BJ (cell line): ENCODE measurements at regions of chr12 and their contacts with region 1.

Region 1: DNA sequence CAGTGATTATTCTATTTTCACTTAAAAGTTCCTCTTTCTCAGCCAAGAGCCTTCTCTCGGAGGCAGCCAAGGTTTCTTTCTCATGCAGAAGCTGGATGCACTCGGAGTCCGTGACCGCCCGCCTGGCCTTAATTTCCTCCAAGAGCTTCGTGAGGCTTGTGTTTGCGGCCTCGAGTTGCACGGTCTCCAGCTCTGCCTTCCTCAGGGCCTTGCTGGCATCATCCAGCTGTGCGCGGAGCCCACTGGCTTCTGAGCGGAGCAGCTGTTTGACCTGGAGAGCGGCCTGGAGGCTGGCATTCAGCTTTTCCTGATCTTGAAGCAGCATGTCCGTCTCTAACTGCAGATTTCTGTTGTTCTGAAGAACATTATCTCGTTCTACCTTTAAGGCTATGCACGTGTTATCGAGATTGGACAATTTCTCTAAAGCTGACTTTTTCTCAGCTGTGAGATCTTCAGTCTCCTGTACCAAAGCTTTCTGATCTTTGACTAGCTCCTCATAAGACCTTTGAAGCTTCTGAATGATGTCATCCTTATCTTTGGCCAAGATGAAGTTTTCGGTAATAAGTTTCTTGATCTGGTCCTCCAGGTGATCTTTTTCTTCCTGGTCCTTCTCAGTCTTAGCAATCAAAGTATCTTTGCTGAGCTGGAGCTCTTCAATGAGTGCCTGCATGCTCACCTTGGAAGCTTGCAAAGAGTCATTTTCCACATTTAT is 57.2 kb upstream of the VPS33A start:
- DNase-seq: no peak
- H3K4me3 ChIP-seq: no peak overlapping the region
- H3K27me3 ChIP-seq: no peaks in the 10 kb centered on the region
- CTCF ChIP-seq: no peak

Region 2: GRCh38 chr12:122182887-122183585 is 140.4 kb before region 1 on chr12 and contains the start of gene LRRC43:
- CTCF ChIA-PET with region 1: no interaction called
- POLR2A ChIA-PET with region 1: no interaction called
- DNase-seq: no peak
- H3K4me3 ChIP-seq: peak within 1 kb of the TSS; percentile 49
- H3K27me3 ChIP-seq: no peaks in the 10 kb centered on the region
- CTCF ChIP-seq: no peak
- polyA plus RNA-seq, gene LRRC43: 0.71 and 1.6 TPM in 2 replicates

Region 3: GRCh38 chr12:122293081-122293480 is 30.4 kb before region 1 on chr12:
- CTCF ChIA-PET with region 1: no interaction called
- POLR2A ChIA-PET with region 1: no interaction called
- DNase-seq: no peak
- H3K4me3 ChIP-seq: no peak overlapping the region
- H3K27me3 ChIP-seq: no peaks in the 10 kb centered on the region
- CTCF ChIP-seq: no peak

Region 4: DNA sequence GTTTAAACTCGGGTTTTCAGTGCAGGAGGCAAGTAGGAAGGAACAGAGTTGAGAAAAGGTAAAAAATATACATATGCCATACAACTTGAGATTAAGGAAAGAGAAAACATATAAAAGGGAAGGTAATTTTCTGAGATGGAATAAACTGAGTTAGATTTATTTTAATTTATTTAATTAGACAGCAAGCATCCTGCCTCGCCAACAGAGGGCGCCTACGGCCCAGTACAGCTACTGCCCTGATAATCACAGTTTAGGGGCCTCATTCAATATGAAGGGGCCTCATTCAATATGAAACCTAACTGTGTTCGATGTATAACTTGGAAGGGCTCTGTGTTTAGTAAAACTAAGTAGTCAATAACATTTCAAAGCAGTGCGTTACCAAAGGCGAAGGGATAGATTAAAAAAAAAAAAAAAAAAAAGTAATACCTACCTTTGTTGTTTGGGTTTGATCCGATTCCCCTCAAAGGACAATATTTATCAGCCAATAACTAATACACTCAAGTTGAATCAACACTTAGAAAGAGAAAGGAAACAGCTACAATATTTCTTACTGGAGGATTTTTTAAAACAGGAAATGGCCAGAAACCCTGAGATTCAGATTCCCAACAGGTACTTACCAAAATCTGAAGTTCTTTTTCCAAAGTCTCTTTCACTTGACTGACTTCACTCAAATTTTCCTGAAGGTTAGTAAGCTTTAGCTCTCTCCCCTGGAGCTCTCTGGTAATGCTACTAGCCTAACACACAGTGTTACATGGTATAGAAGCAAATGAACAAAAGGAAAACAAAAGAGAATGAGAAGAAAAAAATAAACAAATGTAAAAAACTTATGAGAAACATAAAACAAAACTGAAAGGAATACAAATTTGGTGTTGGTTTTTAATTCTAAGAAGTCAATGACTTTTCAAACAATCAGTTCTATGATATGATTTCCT is 12.8 kb after region 1 on chr12:
- CTCF ChIA-PET with region 1: interaction called, 19 read pairs
- POLR2A ChIA-PET with region 1: no interaction called
- DNase-seq: no peak
- H3K4me3 ChIP-seq: no peak overlapping the region
- H3K27me3 ChIP-seq: no peaks in the 10 kb centered on the region
- CTCF ChIP-seq: peak; percentile 79

Region 5: GRCh38 chr12:123064885-123065619 is 741.6 kb after region 1 on chr12:
- CTCF ChIA-PET with region 1: no interaction called
- POLR2A ChIA-PET with region 1: no interaction called
- DNase-seq: no peak
- H3K4me3 ChIP-seq: no peak overlapping the region
- H3K27me3 ChIP-seq: no peaks in the 10 kb centered on the region; the same call in 1 of the 2 replicates
- CTCF ChIP-seq: no peak